ENCODE measurements at regions of chr17 and their contacts with region 1.

Region 1: GRCh38 chr17:8409966-8410864 is 12.6 kb upstream of the RNF222 start:
- DNase-seq: peak; percentile 17
- ATAC-seq: peak; percentile 90
- H3K4me3 ChIP-seq: no peak overlapping the region
- H3K27ac ChIP-seq: no peak overlapping the region
- H3K4me1 ChIP-seq: no peaks in the 10 kb centered on the region
- H3K27me3 ChIP-seq: peaks cover 0 to 4% of the 10 kb centered on the region in 2 experiments; a peak in 3 of 4 replicates
- CTCF ChIP-seq: peak; percentile 82 to 87 (median 83)
- EP300 ChIP-seq: 0 out of 4 replicates have a peak, but pooled peaks of 1 of the 2 experiments have one; percentile 15
- POLR2A ChIP-seq: no peak
- RAD21 ChIP-seq: peak; percentile 71

Region 2: DNA sequence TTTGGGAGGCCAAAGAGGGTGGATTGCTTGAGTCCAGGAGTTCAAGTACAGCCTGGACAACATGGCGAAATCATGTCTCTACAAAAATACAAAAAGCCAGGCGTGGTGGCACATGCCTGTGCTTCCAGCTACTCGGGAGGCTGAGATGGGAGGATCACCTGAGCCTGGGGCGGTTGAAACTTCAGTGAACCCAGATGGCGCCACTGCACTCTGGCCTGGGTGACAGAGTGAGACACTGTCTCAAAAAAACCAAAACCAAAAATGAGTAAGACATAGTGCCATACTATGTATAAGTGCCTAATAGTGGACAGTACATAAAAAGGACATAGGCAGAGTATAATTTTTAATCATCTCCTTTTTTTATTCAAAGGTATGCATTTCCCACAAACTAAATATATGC is 166.4 kb before region 1 on chr17:
- CTCF ChIA-PET with region 1: no interaction called
- POLR2A ChIA-PET with region 1: no interaction called
- RAD21 ChIA-PET with region 1: no interaction called
- SMC1A ChIA-PET with region 1: no interaction called
- in situ Hi-C with region 1: no loop called
- intact Hi-C with region 1: no loop called
- DNase-seq: no peak
- ATAC-seq: no peak
- H3K4me3 ChIP-seq: no peak overlapping the region
- H3K27ac ChIP-seq: no peak overlapping the region
- H3K4me1 ChIP-seq: peaks cover 10% of the 10 kb centered on the region
- H3K27me3 ChIP-seq: no peaks in the 10 kb centered on the region
- CTCF ChIP-seq: 0 out of 6 replicates have a peak, but pooled peaks of 1 of the 3 experiments have one; percentile 11
- EP300 ChIP-seq: no peak
- POLR2A ChIP-seq: no peak
- RAD21 ChIP-seq: no peak

Region 3: GRCh38 chr17:8420041-8420934 is 10.1 kb after region 1 on chr17:
- CTCF ChIA-PET with region 1: interaction called, 10 read pairs
- POLR2A ChIA-PET with region 1: no interaction called
- RAD21 ChIA-PET with region 1: no interaction called
- SMC1A ChIA-PET with region 1: interaction called, 3 read pairs
- in situ Hi-C with region 1: no loop called
- intact Hi-C with region 1: no loop called
- DNase-seq: no peak
- ATAC-seq: no peak
- H3K4me3 ChIP-seq: no peak overlapping the region
- H3K27ac ChIP-seq: no peak overlapping the region
- H3K4me1 ChIP-seq: no peaks in the 10 kb centered on the region
- H3K27me3 ChIP-seq: peaks cover 2 to 3% of the 10 kb centered on the region in 2 experiments; a peak in 3 of 4 replicates
- CTCF ChIP-seq: no peak
- EP300 ChIP-seq: no peak
- POLR2A ChIP-seq: no peak
- RAD21 ChIP-seq: no peak

Region 4: DNA sequence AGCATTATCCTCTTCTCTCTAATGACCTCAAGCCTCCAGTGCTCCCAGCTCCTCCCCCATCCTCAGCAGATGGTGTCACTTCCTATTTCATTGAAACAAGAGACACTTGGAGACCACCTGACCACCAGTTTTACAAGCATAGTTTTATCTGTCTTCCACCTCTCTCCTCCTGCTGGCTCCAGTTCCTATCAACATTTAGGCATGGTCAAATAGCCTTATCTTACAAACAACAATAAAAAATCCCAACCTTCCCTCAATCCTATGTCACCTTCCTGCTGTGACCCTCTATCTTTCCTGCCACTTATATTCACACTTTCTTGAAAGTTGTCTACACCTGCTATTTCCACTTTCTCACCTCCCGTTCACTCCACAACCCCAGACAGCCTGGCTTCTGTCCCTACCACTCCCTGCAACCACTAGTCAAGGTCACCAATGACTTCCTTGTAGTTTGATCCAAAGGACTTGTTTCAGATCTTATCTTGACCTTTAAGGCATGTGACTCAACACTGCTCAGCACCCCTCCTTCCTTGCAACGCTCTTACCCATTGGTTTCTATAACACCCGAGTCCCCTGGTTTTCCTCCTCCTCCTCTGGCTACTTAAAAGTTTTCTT is 606.8 kb after region 1 on chr17:
- CTCF ChIA-PET with region 1: no interaction called
- POLR2A ChIA-PET with region 1: no interaction called
- RAD21 ChIA-PET with region 1: no interaction called
- SMC1A ChIA-PET with region 1: no interaction called
- in situ Hi-C with region 1: loop called (anchors 10 kb)
- intact Hi-C with region 1: no loop called
- DNase-seq: no peak
- ATAC-seq: no peak
- H3K4me3 ChIP-seq: no peak overlapping the region
- H3K27ac ChIP-seq: no peak overlapping the region
- H3K4me1 ChIP-seq: peaks cover 5% of the 10 kb centered on the region
- H3K27me3 ChIP-seq: peaks cover 4 to 6% of the 10 kb centered on the region in 2 experiments
- CTCF ChIP-seq: no peak
- EP300 ChIP-seq: no peak
- POLR2A ChIP-seq: no peak
- RAD21 ChIP-seq: no peak